Mammary epithelial cell (primary cell): ENCODE measurements at regions of chr18 and their contacts with region 1.

Region 1: GRCh38 chr18:48663931-48664847 is 125.4 kb downstream of the CTIF start:
- DNase-seq: peak; percentile 28
- H3K4me3 ChIP-seq: no peak overlapping the region
- H3K27ac ChIP-seq: no peak overlapping the region
- H3K4me1 ChIP-seq: peaks cover 12% of the 10 kb centered on the region
- H3K27me3 ChIP-seq: no peaks in the 10 kb centered on the region
- CTCF ChIP-seq: peak; percentile 91 to 96

Region 2: DNA sequence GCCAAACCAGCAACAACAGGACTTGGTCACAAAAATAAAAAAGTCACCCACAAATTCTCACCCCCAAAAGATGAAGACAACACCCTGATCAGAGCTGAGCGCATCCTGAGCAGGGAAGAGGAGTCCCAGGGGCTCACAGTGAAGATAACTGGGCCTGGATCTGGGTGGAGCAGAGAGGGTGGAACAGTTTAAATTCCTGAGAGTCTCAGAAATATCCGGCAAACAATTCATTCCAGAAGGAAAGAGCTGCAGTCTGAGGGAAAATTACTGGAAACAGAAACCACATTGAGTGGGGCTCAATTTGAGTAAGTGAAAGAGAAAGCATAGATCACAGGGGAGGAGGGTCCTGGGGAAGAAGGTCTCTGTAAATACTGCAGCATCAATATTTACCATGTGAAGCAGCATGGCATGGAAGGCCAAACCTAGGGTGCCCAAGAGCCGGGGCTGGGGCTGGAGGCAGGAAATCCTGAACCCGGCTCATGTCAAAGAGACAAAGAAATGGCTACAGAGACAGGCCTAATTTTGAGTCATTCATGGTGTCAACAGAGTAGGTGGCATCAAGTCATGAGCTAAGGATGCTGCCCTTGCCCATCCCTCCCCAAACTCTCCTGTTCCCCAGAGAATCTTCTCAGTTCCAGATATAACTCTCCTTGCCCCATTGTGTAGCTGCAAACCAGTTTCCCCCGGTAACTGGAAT is 193.6 kb before region 1 on chr18:
- CTCF ChIA-PET with region 1: interaction called, 3 read pairs
- dilution Hi-C with region 1: no loop called
- in situ Hi-C with region 1: loop called (anchors 5 kb)
- intact Hi-C with region 1: no loop called
- DNase-seq: no peak
- H3K4me3 ChIP-seq: no peak overlapping the region
- H3K27ac ChIP-seq: no peak overlapping the region
- H3K4me1 ChIP-seq: no peaks in the 10 kb centered on the region
- H3K27me3 ChIP-seq: no peaks in the 10 kb centered on the region
- CTCF ChIP-seq: no peak

Region 3: GRCh38 chr18:48538531-48539405 is 125.4 kb before region 1 on chr18 and contains the start of gene CTIF:
- CTCF ChIA-PET with region 1: interaction called, 6 read pairs
- dilution Hi-C with region 1: no loop called
- in situ Hi-C with region 1: no loop called
- intact Hi-C with region 1: loop called (anchors 1 kb)
- DNase-seq: peak; percentile 94
- H3K4me3 ChIP-seq: peak within 1 kb of the TSS; percentile 77 to 96 (median 92)
- H3K27ac ChIP-seq: peak within 1 kb of the TSS; percentile 91
- H3K4me1 ChIP-seq: peaks cover 25% of the 10 kb centered on the region
- H3K27me3 ChIP-seq: no peaks in the 10 kb centered on the region
- CTCF ChIP-seq: no peak
- total RNA-seq, gene CTIF: 68.8 to 70.8 TPM

Region 4: GRCh38 chr18:48563043-48563442 is 101.1 kb before region 1 on chr18:
- CTCF ChIA-PET with region 1: no interaction called
- dilution Hi-C with region 1: no loop called
- in situ Hi-C with region 1: no loop called
- intact Hi-C with region 1: loop called (anchors 1 kb)
- DNase-seq: peak; percentile 73
- H3K4me3 ChIP-seq: no peak overlapping the region
- H3K27ac ChIP-seq: no peak overlapping the region
- H3K4me1 ChIP-seq: peaks cover 21% of the 10 kb centered on the region
- H3K27me3 ChIP-seq: no peaks in the 10 kb centered on the region
- CTCF ChIP-seq: no peak

Region 5: GRCh38 chr18:48605408-48605845 is 58.8 kb before region 1 on chr18:
- CTCF ChIA-PET with region 1: no interaction called
- dilution Hi-C with region 1: no loop called
- in situ Hi-C with region 1: no loop called
- intact Hi-C with region 1: loop called (anchors 5 kb)
- DNase-seq: no peak
- H3K4me3 ChIP-seq: no peak overlapping the region
- H3K27ac ChIP-seq: no peak overlapping the region
- H3K4me1 ChIP-seq: peaks cover 16% of the 10 kb centered on the region
- H3K27me3 ChIP-seq: no peaks in the 10 kb centered on the region
- CTCF ChIP-seq: peak; percentile 19 to 21

Region 6: GRCh38 chr18:48997985-48998831 is 334.0 kb after region 1 on chr18:
- CTCF ChIA-PET with region 1: no interaction called
- dilution Hi-C with region 1: no loop called
- in situ Hi-C with region 1: no loop called
- intact Hi-C with region 1: no loop called
- DNase-seq: peak; percentile 96
- H3K4me3 ChIP-seq: no peak overlapping the region
- H3K27ac ChIP-seq: peak overlapping the region; percentile 90
- H3K4me1 ChIP-seq: peaks cover 25% of the 10 kb centered on the region
- H3K27me3 ChIP-seq: no peaks in the 10 kb centered on the region
- CTCF ChIP-seq: no peak